PC-3 (cell line): ENCODE measurements at regions of chr2 and their contacts with region 1.

Region 1: DNA sequence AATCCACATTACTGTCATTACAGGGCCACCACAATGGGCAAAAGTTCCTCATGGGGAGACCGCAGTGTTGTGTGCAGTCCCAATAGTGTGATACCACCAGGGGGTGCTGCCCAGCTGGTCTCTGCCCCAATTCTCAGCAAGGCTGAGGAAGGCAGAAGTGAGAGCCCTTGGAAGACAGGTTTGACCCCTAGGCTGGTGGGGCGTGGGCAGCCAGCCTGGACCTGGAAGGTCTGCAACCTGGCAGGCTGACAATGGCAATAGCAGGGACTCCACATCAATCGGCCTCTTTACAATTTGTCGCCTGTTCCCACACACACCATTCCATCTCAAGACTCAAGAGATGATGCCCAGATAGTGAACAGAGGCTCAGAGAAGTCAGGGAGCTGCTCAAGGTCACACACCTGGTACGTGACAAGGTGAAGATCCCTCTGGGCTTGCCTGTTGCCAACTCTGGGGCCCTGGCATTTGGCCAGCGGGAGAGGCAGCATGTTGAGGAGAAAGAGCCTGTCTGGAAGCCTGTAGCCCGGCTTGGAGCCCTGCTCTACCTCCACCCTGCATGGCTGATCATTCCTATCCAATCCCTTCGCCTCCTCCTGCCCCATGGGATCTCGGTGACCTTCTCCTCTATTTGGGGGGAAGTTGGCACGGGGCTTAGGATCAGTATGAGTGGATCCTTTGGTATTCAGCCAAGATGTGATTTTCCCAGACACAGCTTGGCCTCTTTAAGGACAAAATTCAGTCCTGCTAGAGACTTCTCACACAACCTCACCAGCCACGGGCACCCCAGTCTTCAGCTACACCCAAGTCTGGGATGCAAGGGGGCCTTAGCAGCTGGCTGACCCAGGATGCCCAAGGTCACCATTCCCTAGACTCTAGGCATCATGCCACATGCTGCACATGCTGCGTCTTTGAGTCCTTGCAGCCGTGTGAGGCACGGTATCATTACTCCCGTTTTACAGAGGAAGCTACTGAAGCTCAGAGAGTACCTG is 2.9 kb upstream of the ATOH8 start:
- DNase-seq: peak; percentile 67
- ATAC-seq: peak; percentile 77
- H3K4me3 ChIP-seq: no peak overlapping the region
- H3K27ac ChIP-seq: no peak overlapping the region
- H3K4me1 ChIP-seq: peaks cover 6% of the 10 kb centered on the region
- H3K27me3 ChIP-seq: peaks cover 60% of the 10 kb centered on the region
- CTCF ChIP-seq: peak; percentile 92

Region 2: GRCh38 chr2:85728883-85729824 is 21.7 kb before region 1 on chr2:
- CTCF ChIA-PET with region 1: interaction called, 9 read pairs
- POLR2A ChIA-PET with region 1: no interaction called
- intact Hi-C with region 1: loop called (anchors 1 kb)
- DNase-seq: peak; percentile 83
- ATAC-seq: peak; percentile 100
- H3K4me3 ChIP-seq: no peak overlapping the region
- H3K27ac ChIP-seq: no peak overlapping the region
- H3K4me1 ChIP-seq: no peaks in the 10 kb centered on the region
- H3K27me3 ChIP-seq: peaks cover 5% of the 10 kb centered on the region; the same call in 1 of the 2 replicates
- CTCF ChIP-seq: peak; percentile 95

Region 3: DNA sequence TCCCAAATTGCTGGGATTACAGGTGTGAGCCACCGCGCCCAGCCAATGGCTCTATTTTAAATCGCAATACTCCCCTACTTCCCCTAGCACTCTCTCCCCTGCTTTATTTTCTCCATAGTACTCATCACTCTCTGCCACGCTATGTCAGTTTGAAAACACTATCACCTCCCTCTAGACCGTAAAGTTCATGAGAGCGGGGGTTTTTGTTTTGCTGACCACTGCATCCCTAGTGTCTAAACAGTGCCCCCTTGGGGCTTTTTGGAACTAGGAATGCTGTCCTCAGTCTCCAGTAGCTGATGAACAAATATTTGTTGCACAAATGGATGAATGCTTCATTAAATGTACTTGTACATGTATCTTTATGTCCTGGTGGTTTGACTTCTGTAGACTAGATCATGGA is 47.0 kb after region 1 on chr2:
- CTCF ChIA-PET with region 1: interaction called, 5 read pairs
- POLR2A ChIA-PET with region 1: no interaction called
- intact Hi-C with region 1: loop called (anchors 5 kb)
- DNase-seq: peak; percentile 44
- ATAC-seq: peak; percentile 18; the same call in 1 of the 2 replicates
- H3K4me3 ChIP-seq: no peak overlapping the region
- H3K27ac ChIP-seq: no peak overlapping the region
- H3K4me1 ChIP-seq: peaks cover 23% of the 10 kb centered on the region
- H3K27me3 ChIP-seq: no peaks in the 10 kb centered on the region
- CTCF ChIP-seq: peak; percentile 68